ENCODE measurements at regions of chr3 and their contacts with region 1.

Region 1: GRCh38 chr3:196528639-196529233 is 13.6 kb upstream of the SMCO1 start:
- DNase-seq: peak; percentile 54
- H3K4me3 ChIP-seq: peak overlapping the region; percentile 29 to 59 (median 38)
- H3K27ac ChIP-seq: peak overlapping the region; percentile 40
- H3K4me1 ChIP-seq: peaks cover 8% of the 10 kb centered on the region
- H3K27me3 ChIP-seq: no peaks in the 10 kb centered on the region
- CTCF ChIP-seq: peak; percentile 72 to 95
- POLR2A ChIP-seq: peak; percentile 61

Region 2: GRCh38 chr3:196251918-196252317 is 276.8 kb before region 1 on chr3:
- CTCF ChIA-PET with region 1: interaction called, 75 read pairs
- POLR2A ChIA-PET with region 1: no interaction called
- dilution Hi-C with region 1: no loop called
- intact Hi-C with region 1: no loop called
- DNase-seq: no peak
- H3K4me3 ChIP-seq: no peak overlapping the region
- H3K27ac ChIP-seq: no peak overlapping the region
- H3K4me1 ChIP-seq: no peaks in the 10 kb centered on the region
- H3K27me3 ChIP-seq: no peaks in the 10 kb centered on the region
- CTCF ChIP-seq: no peak
- POLR2A ChIP-seq: no peak

Region 3: GRCh38 chr3:196502775-196503195 is 26.0 kb before region 1 on chr3:
- CTCF ChIA-PET with region 1: interaction called, 6 read pairs
- POLR2A ChIA-PET with region 1: no interaction called
- dilution Hi-C with region 1: no loop called
- intact Hi-C with region 1: loop called (anchors 2 kb)
- DNase-seq: peak; percentile 92
- H3K4me3 ChIP-seq: peak overlapping the region; percentile 61 to 84 (median 67)
- H3K27ac ChIP-seq: peak overlapping the region; percentile 85
- H3K4me1 ChIP-seq: peaks cover 13% of the 10 kb centered on the region
- H3K27me3 ChIP-seq: no peaks in the 10 kb centered on the region
- CTCF ChIP-seq: no peak
- POLR2A ChIP-seq: no peak

Region 4: GRCh38 chr3:196684548-196685407 is 156.0 kb after region 1 on chr3:
- CTCF ChIA-PET with region 1: interaction called, 17 read pairs
- POLR2A ChIA-PET with region 1: no interaction called
- dilution Hi-C with region 1: no loop called
- intact Hi-C with region 1: loop called (anchors 2 kb)
- DNase-seq: peak; percentile 61
- H3K4me3 ChIP-seq: no peak overlapping the region
- H3K27ac ChIP-seq: no peak overlapping the region
- H3K4me1 ChIP-seq: peaks cover 7% of the 10 kb centered on the region
- H3K27me3 ChIP-seq: peaks cover 0 to 3% of the 10 kb centered on the region in 2 experiments
- CTCF ChIP-seq: peak; percentile 73
- POLR2A ChIP-seq: no peak

Region 5: DNA sequence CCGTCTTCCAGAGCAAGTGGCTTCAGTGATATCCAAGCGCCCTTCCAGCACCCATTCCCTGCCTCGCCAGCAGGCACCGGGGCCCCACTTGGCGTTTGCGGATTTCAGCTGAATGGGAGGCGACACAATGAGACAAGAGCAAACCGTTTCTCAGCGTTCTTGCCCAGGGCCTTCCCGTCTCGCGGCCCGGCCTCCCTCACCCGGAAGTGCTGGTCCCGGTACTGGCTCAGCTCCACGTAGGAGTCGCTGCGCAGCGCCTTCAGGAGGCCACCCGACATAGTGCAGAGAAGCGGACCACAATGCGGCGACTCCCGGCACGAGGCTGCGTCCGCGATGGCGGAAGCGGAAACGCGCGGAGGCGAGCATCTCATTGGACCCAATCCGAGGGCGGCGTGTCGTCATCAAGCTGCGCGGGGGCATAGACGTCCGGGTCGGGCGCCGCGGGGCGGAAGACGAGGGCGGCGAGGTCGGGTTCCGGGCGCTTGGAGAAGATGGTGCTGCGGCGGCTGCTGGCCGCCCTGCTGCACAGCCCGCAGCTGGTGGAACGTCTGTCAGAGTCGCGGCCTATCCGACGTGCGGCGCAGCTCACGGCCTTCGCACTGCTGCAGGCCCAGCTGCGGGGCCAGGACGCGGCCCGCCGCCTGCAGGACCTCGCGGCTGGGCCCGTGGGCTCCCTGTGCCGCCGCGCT is 413.6 kb after region 1 on chr3 and contains the start of gene NCBP2:
- CTCF ChIA-PET with region 1: interaction called, 3 read pairs
- POLR2A ChIA-PET with region 1: no interaction called
- dilution Hi-C with region 1: no loop called
- intact Hi-C with region 1: loop called (anchors 2 kb)
- DNase-seq: peak; percentile 98
- H3K4me3 ChIP-seq: peak within 1 kb of the TSS; percentile 73 to 93 (median 85)
- H3K27ac ChIP-seq: peak within 1 kb of the TSS; percentile 76
- H3K4me1 ChIP-seq: peaks cover 16% of the 10 kb centered on the region
- H3K27me3 ChIP-seq: no peaks in the 10 kb centered on the region
- CTCF ChIP-seq: peak; percentile 64 to 81
- POLR2A ChIP-seq: peak; percentile 90
- total RNA-seq, gene NCBP2: 73.4 and 76.1 TPM in 2 replicates